A549 (cell line): ENCODE measurements at regions of chr17 and their contacts with region 1.

Region 1: GRCh38 chr17:17300624-17301568 is 2.3 kb upstream of the NT5M start:
- DNase-seq: peak; percentile 93 to 95
- ATAC-seq: peak; percentile 81 to 90
- H3K4me3 ChIP-seq: peak overlapping the region; percentile 66
- H3K27ac ChIP-seq: peak overlapping the region; percentile 84 to 90
- H3K4me1 ChIP-seq: peaks cover 44% of the 10 kb centered on the region
- CTCF ChIP-seq: no peak
- EP300 ChIP-seq: no peak
- POLR2A ChIP-seq: peak; percentile 61
- RAD21 ChIP-seq: no peak

Region 2: DNA sequence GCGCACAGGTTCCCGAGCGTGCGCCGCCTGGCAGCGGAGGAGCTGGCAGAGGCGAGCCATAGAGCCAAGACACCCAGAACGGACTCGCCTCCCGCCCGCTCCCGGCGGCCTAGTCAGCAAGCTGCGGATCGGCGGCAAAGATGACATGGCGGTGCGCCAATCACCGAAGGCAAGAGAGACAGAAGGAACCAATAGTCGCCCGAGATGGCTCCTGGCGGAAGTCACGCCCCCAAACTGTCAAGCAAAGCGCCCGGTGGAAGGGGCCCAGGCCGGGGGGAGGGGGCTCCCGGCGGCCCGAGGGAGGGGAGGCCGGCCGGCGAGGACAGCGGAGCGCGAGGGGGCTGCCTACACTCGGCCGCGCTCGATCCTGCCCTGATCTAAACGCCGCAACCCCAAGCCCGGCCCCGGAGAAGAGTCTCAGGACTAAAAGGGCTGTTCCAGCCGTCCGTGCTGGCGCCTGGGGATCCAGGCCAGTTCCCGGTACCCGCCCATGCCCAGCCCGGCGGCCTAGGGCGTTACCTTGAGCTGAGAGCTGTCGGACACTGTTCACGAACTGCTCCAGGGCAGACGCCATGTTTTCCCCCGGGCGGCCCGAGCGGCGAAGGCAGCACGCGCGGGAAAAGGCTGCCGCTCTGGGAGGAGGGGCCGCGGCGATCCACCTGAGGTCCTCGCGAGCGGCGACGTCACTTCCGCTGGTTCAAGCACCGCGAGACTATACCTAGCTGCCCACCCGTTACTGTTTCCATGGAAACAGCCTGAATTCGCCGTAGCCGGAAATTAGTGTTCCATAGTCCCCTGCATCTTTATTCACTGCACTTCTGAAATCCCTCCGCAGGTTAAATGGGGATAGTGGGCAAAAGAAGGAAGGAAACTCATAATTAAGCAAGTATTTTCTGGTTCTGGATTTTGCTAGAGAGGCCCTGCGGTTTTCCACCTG is 20.0 kb before region 1 on chr17 and contains the start of gene COPS3:
- CTCF ChIA-PET with region 1: interaction called, 5 read pairs
- POLR2A ChIA-PET with region 1: interaction called, 14 read pairs
- DNase-seq: peak; percentile 99 to 100
- ATAC-seq: peak; percentile 97 to 98
- H3K4me3 ChIP-seq: peak within 1 kb of the TSS; percentile 94
- H3K27ac ChIP-seq: peak within 1 kb of the TSS; percentile 92 to 94
- H3K4me1 ChIP-seq: peaks cover 20% of the 10 kb centered on the region; the same call in 2 of the 3 replicates
- CTCF ChIP-seq: no peak
- EP300 ChIP-seq: no peak
- POLR2A ChIP-seq: peak; percentile 77
- RAD21 ChIP-seq: no peak
- polyA plus RNA-seq, gene COPS3: 204 and 209 TPM in 2 replicates